ENCODE measurements at regions of chr1 and their contacts with region 1.

Region 1: GRCh38 chr1:53196485-53197270 is at the start of gene CPT2:
- DNase-seq: peak; percentile 75 to 95 (median 92)
- ATAC-seq: peak; percentile 94
- H3K4me3 ChIP-seq: peak within 1 kb of the TSS; percentile 79 to 80
- H3K4me3 Mint-ChIP-seq: peak within 1 kb of the TSS; percentile 97
- H3K27ac ChIP-seq: peak within 1 kb of the TSS; percentile 95 to 96
- H3K27ac Mint-ChIP-seq: peak within 1 kb of the TSS; percentile 96
- H3K4me1 ChIP-seq: peaks cover 22% of the 10 kb centered on the region
- H3K4me1 Mint-ChIP-seq: peaks cover 38% of the 10 kb centered on the region
- H3K27me3 ChIP-seq: no peaks in the 10 kb centered on the region
- H3K27me3 Mint-ChIP-seq: no peaks in the 10 kb centered on the region
- CTCF ChIP-seq: no peak
- total RNA-seq, gene CPT2: 7.8 to 8.2 TPM

Region 2: DNA sequence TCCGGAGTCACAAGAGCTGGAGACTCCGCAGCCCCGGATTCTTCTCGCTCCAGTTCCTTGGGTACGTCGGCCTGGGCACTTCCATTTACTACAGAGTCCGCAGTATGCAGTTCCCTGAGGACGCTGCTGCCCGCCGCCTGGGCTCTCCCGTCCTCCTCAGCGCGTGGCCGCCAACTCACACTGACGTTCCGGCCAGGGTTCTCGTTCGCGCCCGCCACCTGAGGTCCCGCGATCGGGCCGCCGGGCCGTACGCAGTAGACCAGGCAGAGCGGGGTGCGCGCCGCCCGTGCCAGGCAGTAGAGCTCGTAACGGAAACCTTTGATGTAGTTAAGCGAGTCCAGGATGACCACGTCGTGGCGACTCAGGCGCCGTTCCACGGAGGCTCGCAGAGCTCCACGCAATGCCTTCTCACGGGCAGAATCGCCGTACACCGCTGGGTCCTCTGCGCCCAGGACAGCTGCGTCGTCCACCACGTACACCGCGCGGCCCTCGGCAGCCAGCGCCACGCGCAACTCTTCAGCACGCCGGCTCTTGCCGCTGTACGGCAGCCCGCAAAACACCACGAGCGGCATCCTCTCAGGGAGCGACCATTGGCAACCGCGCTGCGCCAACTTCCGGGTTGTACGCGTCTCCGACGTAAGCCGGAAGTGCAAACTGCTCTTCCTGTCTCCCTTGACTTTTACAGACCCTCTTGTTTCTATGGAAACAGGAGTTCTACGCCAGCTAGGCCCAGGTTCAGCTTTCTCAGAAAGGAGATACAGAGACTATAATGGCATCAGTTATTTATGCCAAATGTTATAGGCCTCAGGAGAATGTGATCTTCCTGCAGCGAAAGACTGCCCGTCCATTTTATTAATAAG is 1163.3 kb before region 1 on chr1 and contains the start of gene KTI12:
- CTCF ChIA-PET with region 1: no interaction called
- POLR2A ChIA-PET with region 1: no interaction called
- intact Hi-C with region 1: loop called in 1 of 2 experiments (anchors 10 kb)
- DNase-seq: peak; percentile 78 to 97 (median 88)
- ATAC-seq: peak; percentile 92
- H3K4me3 ChIP-seq: peak within 1 kb of the TSS; percentile 78 to 80
- H3K4me3 Mint-ChIP-seq: peak within 1 kb of the TSS; percentile 92
- H3K27ac ChIP-seq: peak within 1 kb of the TSS; percentile 88 to 89
- H3K27ac Mint-ChIP-seq: peak within 1 kb of the TSS; percentile 95
- H3K4me1 ChIP-seq: peaks cover 30% of the 10 kb centered on the region
- H3K4me1 Mint-ChIP-seq: peaks cover 38% of the 10 kb centered on the region
- H3K27me3 ChIP-seq: no peaks in the 10 kb centered on the region
- H3K27me3 Mint-ChIP-seq: no peaks in the 10 kb centered on the region
- CTCF ChIP-seq: no peak
- total RNA-seq, gene KTI12: 23.6 to 24.7 TPM

Region 3: DNA sequence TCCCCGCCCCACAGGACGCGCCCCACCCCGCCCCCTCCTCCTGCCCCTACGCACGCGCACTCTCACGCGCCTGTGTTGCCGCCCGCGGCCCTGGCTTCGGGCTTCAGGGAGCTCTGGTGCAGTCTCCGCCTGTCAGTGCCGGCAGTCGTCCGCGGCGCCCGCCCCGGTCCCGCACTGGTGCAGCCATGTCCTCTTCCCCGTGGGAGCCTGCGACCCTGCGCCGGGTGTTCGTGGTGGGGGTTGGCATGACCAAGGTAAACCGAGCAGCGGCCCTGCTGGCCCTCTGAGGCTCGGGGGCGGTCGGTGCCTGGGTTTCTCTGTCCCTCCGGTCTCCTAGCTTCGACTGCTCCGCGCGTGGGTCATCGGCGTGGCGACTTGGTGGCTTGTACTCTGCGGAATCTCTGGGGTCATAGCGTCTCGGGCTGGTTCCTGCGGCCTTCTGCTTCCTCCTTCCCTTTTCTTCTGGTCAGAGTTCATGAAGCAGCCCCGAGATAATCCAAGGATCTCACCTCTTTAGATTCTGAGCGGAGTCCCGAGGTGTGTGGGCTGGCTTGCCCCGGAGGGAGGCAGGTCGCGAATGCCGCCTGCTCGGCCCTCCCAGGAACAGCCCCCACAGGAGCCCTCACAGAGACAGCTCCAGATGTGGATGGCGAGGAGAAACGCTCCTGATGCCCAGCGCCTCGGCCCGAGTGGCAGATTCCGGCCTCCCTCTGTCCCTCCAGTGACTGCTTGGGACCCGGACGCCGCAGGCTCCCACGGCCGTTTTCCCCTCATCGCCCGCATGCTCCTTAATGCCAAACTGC is 269.3 kb before region 1 on chr1 and contains the start of gene SCP2:
- CTCF ChIA-PET with region 1: no interaction called
- POLR2A ChIA-PET with region 1: no interaction called
- intact Hi-C with region 1: loop called in 1 of 2 experiments (anchors 5 kb)
- DNase-seq: peak; percentile 43 to 90 (median 79)
- ATAC-seq: peak; percentile 95
- H3K4me3 ChIP-seq: peak within 1 kb of the TSS; percentile 83 to 88
- H3K4me3 Mint-ChIP-seq: peak within 1 kb of the TSS; percentile 87
- H3K27ac ChIP-seq: peak within 1 kb of the TSS; percentile 8 to 40
- H3K27ac Mint-ChIP-seq: peak within 1 kb of the TSS; percentile 57
- H3K4me1 ChIP-seq: peaks cover 16% of the 10 kb centered on the region
- H3K4me1 Mint-ChIP-seq: peaks cover 23% of the 10 kb centered on the region
- H3K27me3 ChIP-seq: no peaks in the 10 kb centered on the region
- H3K27me3 Mint-ChIP-seq: no peaks in the 10 kb centered on the region
- CTCF ChIP-seq: no peak
- total RNA-seq, gene SCP2: 25.5 to 27.6 TPM

Region 4: GRCh38 chr1:53207726-53208125 is 11.0 kb after region 1 on chr1:
- CTCF ChIA-PET with region 1: no interaction called
- POLR2A ChIA-PET with region 1: interaction called, 4 read pairs
- intact Hi-C with region 1: loop called in 1 of 2 experiments (anchors 2 kb)
- DNase-seq: no peak
- ATAC-seq: no peak
- H3K4me3 ChIP-seq: no peak overlapping the region
- H3K4me3 Mint-ChIP-seq: no peak overlapping the region
- H3K27ac ChIP-seq: no peak overlapping the region
- H3K27ac Mint-ChIP-seq: no peak overlapping the region
- H3K4me1 ChIP-seq: no peaks in the 10 kb centered on the region
- H3K4me1 Mint-ChIP-seq: peaks cover 6% of the 10 kb centered on the region
- H3K27me3 ChIP-seq: no peaks in the 10 kb centered on the region
- H3K27me3 Mint-ChIP-seq: no peaks in the 10 kb centered on the region
- CTCF ChIP-seq: no peak

Region 5: DNA sequence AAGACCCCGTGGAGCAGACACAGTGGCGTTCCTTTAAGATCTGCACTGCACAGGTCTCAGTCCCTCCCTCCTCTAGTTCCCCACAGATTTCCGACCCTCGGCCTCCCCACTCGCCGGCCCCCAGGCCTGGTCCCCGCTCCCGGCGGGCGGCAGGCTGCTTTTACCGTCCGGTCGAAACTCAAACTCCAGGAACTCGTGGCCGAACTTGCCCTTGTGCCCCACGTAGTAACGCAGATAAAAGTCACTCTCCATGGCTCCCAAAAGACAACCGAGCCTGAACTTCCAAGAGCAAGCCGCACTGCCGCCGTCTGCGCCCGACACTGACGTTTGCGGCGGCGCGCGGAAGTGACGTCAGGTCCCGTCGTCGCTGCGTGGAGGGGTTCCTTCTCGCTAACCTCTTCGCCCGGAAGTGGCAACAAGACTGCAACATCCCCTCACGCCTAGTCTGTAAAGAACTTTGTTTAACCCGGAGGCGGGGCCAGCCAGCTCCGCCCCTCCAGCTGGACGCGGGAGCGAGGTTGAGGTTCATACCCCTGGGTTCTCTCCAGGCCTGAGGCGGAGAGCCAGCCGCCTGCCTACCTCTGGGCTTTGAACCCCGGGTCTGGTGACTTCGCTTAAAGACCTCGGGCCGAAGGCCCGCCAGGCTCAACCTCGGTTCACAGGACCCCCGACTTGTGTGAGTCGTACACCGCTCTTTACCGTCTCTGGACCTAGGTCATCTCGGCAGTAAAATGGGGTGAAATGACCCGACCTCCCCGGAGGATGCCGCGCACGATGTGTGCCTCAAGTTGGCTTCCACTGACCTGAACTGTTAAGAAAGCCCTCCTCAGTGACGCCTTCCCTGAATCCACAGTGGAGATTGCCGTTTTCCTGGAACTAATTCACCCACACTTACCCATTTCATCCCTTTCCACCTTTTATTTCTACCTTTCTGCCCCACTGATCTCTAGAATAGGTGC is 41.8 kb after region 1 on chr1 and contains the start of gene MAGOH:
- CTCF ChIA-PET with region 1: no interaction called
- POLR2A ChIA-PET with region 1: interaction called, 4 read pairs
- intact Hi-C with region 1: loop called (anchors 1 kb)
- DNase-seq: peak; percentile 87 to 97 (median 95)
- ATAC-seq: peak; percentile 97
- H3K4me3 ChIP-seq: peak within 1 kb of the TSS; percentile 94 to 100
- H3K4me3 Mint-ChIP-seq: peak within 1 kb of the TSS; percentile 97
- H3K27ac ChIP-seq: peak within 1 kb of the TSS; percentile 89 to 95
- H3K27ac Mint-ChIP-seq: peak within 1 kb of the TSS; percentile 96
- H3K4me1 ChIP-seq: peaks cover 17% of the 10 kb centered on the region
- H3K4me1 Mint-ChIP-seq: peaks cover 33% of the 10 kb centered on the region
- H3K27me3 ChIP-seq: no peaks in the 10 kb centered on the region
- H3K27me3 Mint-ChIP-seq: no peaks in the 10 kb centered on the region
- CTCF ChIP-seq: no peak
- total RNA-seq, gene MAGOH: 77.2 to 79.5 TPM

Region 6: GRCh38 chr1:53562291-53562980 is 365.8 kb after region 1 on chr1:
- CTCF ChIA-PET with region 1: no interaction called
- POLR2A ChIA-PET with region 1: no interaction called
- intact Hi-C with region 1: no loop called
- DNase-seq: peak in 4 of 9 experiments; percentile 26 to 67 (median 56)
- ATAC-seq: peak; percentile 84
- H3K4me3 ChIP-seq: peak overlapping the region in 1 of 2 experiments; percentile 31
- H3K4me3 Mint-ChIP-seq: peak overlapping the region; percentile 50
- H3K27ac ChIP-seq: no peak overlapping the region
- H3K27ac Mint-ChIP-seq: no peak overlapping the region
- H3K4me1 ChIP-seq: no peaks in the 10 kb centered on the region
- H3K4me1 Mint-ChIP-seq: peaks cover 23% of the 10 kb centered on the region
- H3K27me3 ChIP-seq: no peaks in the 10 kb centered on the region
- H3K27me3 Mint-ChIP-seq: no peaks in the 10 kb centered on the region
- CTCF ChIP-seq: no peak